Activated CD4-positive, alpha-beta memory T cell treated with anti-CD3 and anti-CD28 coated beads for 36 hours (primary cell): ENCODE measurements at regions of chr9 and their contacts with region 1.

Region 1: DNA sequence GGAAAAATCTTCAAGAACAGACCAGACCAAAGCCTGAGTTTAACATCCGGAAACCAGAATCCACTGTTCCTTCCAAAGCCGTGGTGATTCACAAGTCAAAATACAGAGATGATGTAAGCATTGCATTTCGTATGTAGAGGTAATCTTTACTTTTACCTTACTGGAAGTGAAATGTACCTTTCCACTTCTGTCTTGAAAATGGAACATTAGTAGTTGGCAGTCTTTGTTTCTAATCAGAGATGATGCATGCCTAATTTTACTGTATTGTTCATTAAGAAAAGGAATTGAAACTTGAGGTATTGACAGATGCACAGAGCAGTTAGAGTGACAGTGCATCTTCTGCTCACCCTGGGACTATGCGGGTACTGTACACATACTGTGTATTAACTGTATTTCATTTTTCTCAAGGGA is 34.6 kb downstream of the HABP4 start:
- DNase-seq: peak; percentile 35
- H3K4me3 Mint-ChIP-seq: no peak overlapping the region
- H3K27ac Mint-ChIP-seq: peak overlapping the region; percentile 73
- H3K4me1 Mint-ChIP-seq: peaks cover 41% of the 10 kb centered on the region
- H3K27me3 Mint-ChIP-seq: no peaks in the 10 kb centered on the region

Region 2: DNA sequence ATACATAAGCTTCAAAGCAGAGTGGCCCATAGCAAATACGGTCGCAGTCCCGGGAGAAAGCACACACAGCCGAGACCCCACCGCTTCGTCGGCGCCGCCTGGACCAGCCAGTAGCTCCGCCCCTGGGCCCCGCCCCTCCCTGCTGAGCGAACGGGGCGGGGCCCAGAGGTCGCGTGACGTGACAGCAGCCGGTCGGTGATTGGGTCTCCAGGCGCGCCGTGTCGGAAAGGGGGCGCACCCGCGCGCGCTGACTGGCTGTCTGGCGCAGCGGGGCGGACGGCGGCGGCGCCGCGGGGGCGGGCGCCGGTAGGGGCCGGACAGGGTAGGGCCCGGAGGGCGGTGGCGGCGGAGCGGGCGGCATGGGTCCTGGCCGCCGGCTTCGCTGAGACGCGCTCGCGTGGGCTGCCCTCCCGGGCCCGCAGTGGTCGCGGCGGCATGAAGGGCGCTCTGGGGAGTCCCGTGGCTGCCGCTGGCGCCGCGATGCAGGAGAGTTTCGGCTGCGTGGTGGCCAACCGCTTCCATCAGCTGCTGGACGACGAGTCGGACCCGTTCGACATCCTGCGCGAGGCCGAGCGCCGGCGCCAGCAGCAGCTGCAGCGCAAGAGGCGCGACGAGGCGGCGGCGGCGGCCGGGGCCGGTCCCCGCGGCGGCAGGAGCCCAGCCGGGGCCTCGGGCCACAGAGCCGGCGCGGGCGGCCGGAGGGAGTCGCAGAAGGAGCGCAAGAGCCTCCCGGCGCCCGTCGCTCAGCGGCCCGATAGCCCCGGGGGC is 34.5 kb before region 1 on chr9 and contains the start of gene HABP4:
- CTCF ChIA-PET with region 1: no interaction called
- POLR2A ChIA-PET with region 1: interaction called, 11 read pairs
- intact Hi-C with region 1: loop called (anchors 2 kb)
- DNase-seq: peak; percentile 97
- H3K4me3 Mint-ChIP-seq: peak within 1 kb of the TSS; percentile 89
- H3K27ac Mint-ChIP-seq: peak within 1 kb of the TSS; percentile 75
- H3K4me1 Mint-ChIP-seq: peaks cover 33% of the 10 kb centered on the region
- H3K27me3 Mint-ChIP-seq: peaks cover 8% of the 10 kb centered on the region
- total RNA-seq, gene HABP4: 17.4 to 19.0 TPM

Region 3: GRCh38 chr9:96553070-96553469 is 68.5 kb after region 1 on chr9:
- CTCF ChIA-PET with region 1: no interaction called
- POLR2A ChIA-PET with region 1: no interaction called
- intact Hi-C with region 1: loop called (anchors 1 kb)
- DNase-seq: no peak
- H3K4me3 Mint-ChIP-seq: no peak overlapping the region
- H3K27ac Mint-ChIP-seq: peak overlapping the region; percentile 5
- H3K4me1 Mint-ChIP-seq: peaks cover 45% of the 10 kb centered on the region
- H3K27me3 Mint-ChIP-seq: no peaks in the 10 kb centered on the region